ENCODE measurements at regions of chr14 and their contacts with region 1.

Region 1: GRCh38 chr14:24108336-24108874 is 6.2 kb upstream of the DCAF11 start:
- DNase-seq: no peak
- H3K4me3 Mint-ChIP-seq: peak overlapping the region; percentile 11
- H3K27ac Mint-ChIP-seq: peak overlapping the region; percentile 91
- H3K4me1 Mint-ChIP-seq: peaks cover 22% of the 10 kb centered on the region
- H3K27me3 Mint-ChIP-seq: no peaks in the 10 kb centered on the region

Region 2: GRCh38 chr14:23335623-23336022 is 772.8 kb before region 1 on chr14:
- CTCF ChIA-PET with region 1: no interaction called
- POLR2A ChIA-PET with region 1: no interaction called
- intact Hi-C with region 1: no loop called
- DNase-seq: no peak
- H3K4me3 Mint-ChIP-seq: no peak overlapping the region
- H3K27ac Mint-ChIP-seq: no peak overlapping the region
- H3K4me1 Mint-ChIP-seq: no peaks in the 10 kb centered on the region
- H3K27me3 Mint-ChIP-seq: peaks cover 12% of the 10 kb centered on the region

Region 3: DNA sequence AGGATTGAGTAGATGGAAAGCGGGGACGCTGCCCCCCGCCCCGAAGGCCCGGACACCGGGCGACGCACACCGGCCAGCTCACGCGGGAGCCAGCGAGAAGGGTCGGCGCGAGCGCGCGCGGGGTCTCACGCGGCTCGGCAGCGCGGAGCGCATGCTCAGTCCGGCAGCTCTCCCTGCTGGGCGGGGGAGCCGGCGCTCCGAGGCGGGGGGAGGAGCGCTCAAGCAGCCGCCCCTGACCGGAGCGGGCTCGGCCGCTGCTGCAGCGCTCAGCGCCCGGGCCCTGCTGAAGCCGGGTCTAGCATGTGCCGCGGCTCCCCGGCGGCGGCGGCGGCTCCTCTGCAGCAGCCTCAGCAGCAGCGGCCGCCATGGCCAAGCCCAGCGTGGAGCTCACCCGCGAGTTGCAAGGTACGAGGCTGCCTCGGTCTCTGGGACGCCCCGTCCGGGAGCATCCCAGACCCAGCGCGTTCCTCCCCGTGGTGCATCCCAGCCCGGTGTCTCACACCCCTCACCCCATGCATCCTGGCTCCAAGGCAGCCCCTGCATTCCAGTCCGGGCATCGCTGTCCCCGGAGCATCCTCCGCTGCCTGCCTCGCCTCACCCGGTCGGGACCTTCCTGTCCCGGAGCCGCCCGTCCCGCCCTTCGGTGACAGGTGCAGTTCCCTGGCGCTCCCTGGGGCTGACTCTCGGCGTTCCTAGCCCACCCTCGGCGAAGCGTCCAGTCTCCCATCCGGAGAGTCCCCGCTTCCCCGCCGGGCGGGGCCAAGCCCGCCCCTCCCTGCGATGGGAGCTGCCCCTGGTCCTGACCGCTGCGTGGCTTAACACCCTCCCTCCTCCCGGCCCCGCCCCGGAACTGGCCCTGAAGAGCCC is 56.4 kb before region 1 on chr14 and contains the start of gene CARMIL3:
- CTCF ChIA-PET with region 1: interaction called, 261 read pairs
- POLR2A ChIA-PET with region 1: interaction called, 18 read pairs
- intact Hi-C with region 1: loop called (anchors 1 kb)
- DNase-seq: peak; percentile 74
- H3K4me3 Mint-ChIP-seq: peak within 1 kb of the TSS; percentile 70
- H3K27ac Mint-ChIP-seq: no peak within 1 kb of the TSS
- H3K4me1 Mint-ChIP-seq: peaks cover 20% of the 10 kb centered on the region
- H3K27me3 Mint-ChIP-seq: peaks cover 4% of the 10 kb centered on the region
- total RNA-seq, gene CARMIL3: 0.75 to 1.00 TPM

Region 4: DNA sequence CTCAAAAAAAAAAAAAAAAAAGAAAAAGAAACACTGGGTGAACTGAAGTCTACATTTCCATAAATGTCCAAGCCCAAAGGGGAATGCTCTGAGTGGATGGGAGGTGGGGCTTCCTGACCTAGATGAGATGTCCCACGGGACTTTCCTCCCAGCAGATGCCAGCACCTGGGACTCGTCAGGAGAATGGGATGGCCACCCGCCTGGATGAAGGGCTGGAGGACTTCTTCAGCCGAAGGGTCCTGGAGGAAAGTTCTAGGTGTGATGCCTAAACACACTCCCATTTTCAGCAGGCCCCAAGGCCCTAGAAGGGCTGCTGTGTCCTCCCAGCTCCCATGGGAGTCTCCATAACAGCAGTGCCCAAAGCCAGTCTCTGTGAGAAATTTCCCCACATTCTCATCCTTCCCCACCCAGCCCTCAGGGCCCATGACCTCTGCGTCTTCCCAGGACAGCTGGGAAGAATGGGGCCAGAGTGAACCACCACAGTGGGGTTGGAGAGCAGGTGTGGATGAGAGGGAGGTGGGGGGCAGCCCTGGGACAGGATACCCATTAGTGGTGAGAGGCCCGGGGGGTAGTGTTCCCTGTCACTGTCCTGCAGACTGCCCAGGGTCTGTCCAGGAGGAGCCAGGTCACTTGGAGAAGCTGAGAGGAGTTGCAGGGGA is 44.2 kb before region 1 on chr14:
- CTCF ChIA-PET with region 1: interaction called, 261 read pairs
- POLR2A ChIA-PET with region 1: interaction called, 13 read pairs
- intact Hi-C with region 1: no loop called
- DNase-seq: no peak
- H3K4me3 Mint-ChIP-seq: no peak overlapping the region
- H3K27ac Mint-ChIP-seq: no peak overlapping the region
- H3K4me1 Mint-ChIP-seq: no peaks in the 10 kb centered on the region
- H3K27me3 Mint-ChIP-seq: no peaks in the 10 kb centered on the region

Region 5: GRCh38 chr14:24080888-24081738 is 27.3 kb before region 1 on chr14:
- CTCF ChIA-PET with region 1: interaction called, 17 read pairs
- POLR2A ChIA-PET with region 1: interaction called, 12 read pairs
- intact Hi-C with region 1: no loop called
- DNase-seq: peak; percentile 85
- H3K4me3 Mint-ChIP-seq: peak overlapping the region; percentile 72
- H3K27ac Mint-ChIP-seq: peak overlapping the region; percentile 49
- H3K4me1 Mint-ChIP-seq: peaks cover 16% of the 10 kb centered on the region
- H3K27me3 Mint-ChIP-seq: no peaks in the 10 kb centered on the region

Region 6: GRCh38 chr14:24135834-24136542 is 27.6 kb after region 1 on chr14 and contains the start of gene PSME1:
- CTCF ChIA-PET with region 1: interaction called, 16 read pairs
- POLR2A ChIA-PET with region 1: interaction called, 73 read pairs
- intact Hi-C with region 1: no loop called
- DNase-seq: peak; percentile 97
- H3K4me3 Mint-ChIP-seq: peak within 1 kb of the TSS; percentile 95
- H3K27ac Mint-ChIP-seq: peak within 1 kb of the TSS; percentile 96
- H3K4me1 Mint-ChIP-seq: peaks cover 54% of the 10 kb centered on the region
- H3K27me3 Mint-ChIP-seq: no peaks in the 10 kb centered on the region
- total RNA-seq, gene PSME1: 403 to 427 TPM

Region 7: DNA sequence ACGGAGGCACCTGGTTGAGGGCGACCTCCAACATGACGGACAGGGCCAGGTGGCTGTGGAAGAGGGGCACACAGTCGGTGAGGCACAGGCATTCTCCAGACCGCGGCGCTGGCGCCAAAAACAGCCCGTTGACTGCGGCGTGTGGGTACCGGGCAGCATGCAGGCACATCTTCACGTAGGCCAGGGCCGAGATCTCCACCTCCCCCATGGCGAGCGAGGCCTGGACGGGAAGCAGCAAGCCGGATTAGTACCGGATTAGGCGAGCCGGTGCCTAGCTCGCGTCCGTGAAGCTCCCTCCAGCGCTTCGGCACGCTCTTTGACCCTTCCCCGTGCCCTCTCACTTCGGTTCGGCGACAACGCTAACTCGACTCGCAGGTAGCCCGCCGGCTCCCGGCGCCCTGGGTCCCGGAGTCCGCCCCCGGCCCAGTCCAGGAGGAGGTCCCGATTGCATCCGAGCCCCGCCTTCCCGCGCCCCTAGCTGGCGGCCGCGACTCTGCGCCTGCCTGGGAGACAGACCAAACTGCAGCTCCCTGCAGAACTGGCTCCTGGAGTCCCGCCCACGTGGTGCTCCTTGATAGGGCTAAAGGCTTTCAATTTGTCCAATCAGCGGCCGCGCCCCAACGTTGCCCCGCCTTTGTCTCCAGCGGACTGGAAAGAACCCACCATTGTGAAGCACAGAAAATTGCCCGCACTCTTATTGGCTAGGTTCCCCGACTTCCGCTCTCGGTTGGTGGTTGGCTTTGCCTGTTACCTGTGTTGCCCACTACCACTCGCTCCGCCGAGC is 32.9 kb after region 1 on chr14 and contains the start of gene EMC9:
- CTCF ChIA-PET with region 1: interaction called, 16 read pairs
- POLR2A ChIA-PET with region 1: interaction called, 73 read pairs
- intact Hi-C with region 1: no loop called
- DNase-seq: peak; percentile 100
- H3K4me3 Mint-ChIP-seq: peak within 1 kb of the TSS; percentile 97
- H3K27ac Mint-ChIP-seq: peak within 1 kb of the TSS; percentile 94
- H3K4me1 Mint-ChIP-seq: peaks cover 65% of the 10 kb centered on the region
- H3K27me3 Mint-ChIP-seq: no peaks in the 10 kb centered on the region
- total RNA-seq, gene EMC9: 40.0 to 40.9 TPM

Measured in activated CD4-positive, alpha-beta memory T cell treated with anti-CD3 and anti-CD28 coated beads for 36 hours (primary cell).